ENCODE measurements at regions of chr1 and their contacts with region 1.

Region 1: GRCh38 chr1:11571906-11572616 is 82.2 kb downstream of the FBXO2 start:
- H3K4me3 ChIP-seq: no peak overlapping the region
- H3K27ac ChIP-seq: no peak overlapping the region
- H3K4me1 ChIP-seq: no peaks in the 10 kb centered on the region
- CTCF ChIP-seq: no peak

Region 2: GRCh38 chr1:11558871-11559590 is 13.0 kb before region 1 on chr1:
- CTCF ChIA-PET with region 1: interaction called, 12 read pairs
- POLR2A ChIA-PET with region 1: no interaction called
- H3K4me3 ChIP-seq: no peak overlapping the region
- H3K27ac ChIP-seq: no peak overlapping the region
- H3K4me1 ChIP-seq: 0 out of 2 replicates have a peak, but pooled peaks cover 7% of the 10 kb centered on the region
- CTCF ChIP-seq: no peak

Region 3: DNA sequence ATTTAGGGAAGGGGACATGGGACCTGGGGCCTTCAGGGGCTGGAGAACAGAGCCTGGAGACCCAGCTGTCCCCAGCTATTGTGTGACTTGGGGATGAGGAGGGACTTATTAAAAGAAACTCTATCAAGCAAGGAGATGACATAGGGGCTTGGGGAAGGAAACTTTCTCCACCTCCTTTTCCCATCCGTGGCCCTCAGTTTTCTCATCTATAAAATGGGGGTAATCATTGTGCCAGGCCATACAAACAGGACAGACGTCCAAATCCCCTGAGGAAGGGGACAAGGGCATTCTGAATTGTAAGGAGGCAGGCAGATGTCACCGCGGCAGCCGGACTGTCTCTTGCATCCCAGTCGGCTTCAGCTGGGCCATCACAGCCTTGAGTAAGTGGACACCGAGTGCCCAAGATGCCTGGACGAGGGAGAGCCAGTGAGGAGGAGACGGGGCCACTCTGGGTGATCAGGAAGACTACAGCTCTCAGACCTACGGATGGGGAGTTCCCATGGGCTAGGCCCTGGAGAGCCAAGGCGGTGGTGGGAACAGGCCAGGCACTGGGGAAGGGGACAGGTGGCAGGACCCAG is 80.2 kb after region 1 on chr1:
- CTCF ChIA-PET with region 1: no interaction called
- POLR2A ChIA-PET with region 1: no interaction called
- H3K4me3 ChIP-seq: no peak overlapping the region
- H3K27ac ChIP-seq: no peak overlapping the region
- H3K4me1 ChIP-seq: no peaks in the 10 kb centered on the region
- CTCF ChIP-seq: no peak

Measured in HEK293 (cell line).